ENCODE measurements at regions of chr1 and their contacts with region 1.

Region 1: GRCh38 chr1:151611832-151612500 is at the start of gene SNX27:
- DNase-seq: peak; percentile 76 to 96
- H3K4me3 ChIP-seq: peak within 1 kb of the TSS; percentile 66 to 95
- H3K27ac ChIP-seq: peak within 1 kb of the TSS; percentile 81 to 94
- H3K4me1 ChIP-seq: peaks cover 0 to 6% of the 10 kb centered on the region in 2 donors
- H3K27me3 ChIP-seq: no peaks in the 10 kb centered on the region
- CTCF ChIP-seq: no peak
- total RNA-seq, gene SNX27: 13.0 TPM

Region 2: GRCh38 chr1:151539990-151540981 is 71.7 kb before region 1 on chr1 and contains the start of gene TUFT1:
- intact Hi-C with region 1: loop called (anchors 2 kb)
- DNase-seq: peak; percentile 84 to 97
- H3K4me3 ChIP-seq: peak within 1 kb of the TSS; percentile 63 to 79
- H3K27ac ChIP-seq: peak within 1 kb of the TSS; percentile 71 to 75
- H3K4me1 ChIP-seq: peaks cover 4 to 25% of the 10 kb centered on the region in 2 donors
- H3K27me3 ChIP-seq: no peaks in the 10 kb centered on the region
- CTCF ChIP-seq: no peak
- total RNA-seq, gene TUFT1: 2.3 TPM

Region 3: GRCh38 chr1:151680812-151681211 is 68.8 kb after region 1 on chr1:
- intact Hi-C with region 1: loop called (anchors 2 kb)
- DNase-seq: no peak
- H3K4me3 ChIP-seq: peak overlapping the region in 1 of 2 donors; percentile 9
- H3K27ac ChIP-seq: peak overlapping the region; percentile 58 to 71
- H3K4me1 ChIP-seq: peaks cover 0 to 5% of the 10 kb centered on the region in 2 donors
- H3K27me3 ChIP-seq: no peaks in the 10 kb centered on the region
- CTCF ChIP-seq: no peak

Region 4: GRCh38 chr1:151720974-151721787 is 109.2 kb after region 1 on chr1 and contains the start of gene RIIAD1:
- intact Hi-C with region 1: loop called (anchors 5 kb)
- DNase-seq: peak in 1 of 2 donors; percentile 63
- H3K4me3 ChIP-seq: peak within 1 kb of the TSS; percentile 65 to 82
- H3K27ac ChIP-seq: peak within 1 kb of the TSS; percentile 73 to 78
- H3K4me1 ChIP-seq: peaks cover 6 to 7% of the 10 kb centered on the region in 2 donors
- H3K27me3 ChIP-seq: peaks cover 11% of the 10 kb centered on the region
- CTCF ChIP-seq: no peak
- total RNA-seq, gene RIIAD1: not detected

Region 5: DNA sequence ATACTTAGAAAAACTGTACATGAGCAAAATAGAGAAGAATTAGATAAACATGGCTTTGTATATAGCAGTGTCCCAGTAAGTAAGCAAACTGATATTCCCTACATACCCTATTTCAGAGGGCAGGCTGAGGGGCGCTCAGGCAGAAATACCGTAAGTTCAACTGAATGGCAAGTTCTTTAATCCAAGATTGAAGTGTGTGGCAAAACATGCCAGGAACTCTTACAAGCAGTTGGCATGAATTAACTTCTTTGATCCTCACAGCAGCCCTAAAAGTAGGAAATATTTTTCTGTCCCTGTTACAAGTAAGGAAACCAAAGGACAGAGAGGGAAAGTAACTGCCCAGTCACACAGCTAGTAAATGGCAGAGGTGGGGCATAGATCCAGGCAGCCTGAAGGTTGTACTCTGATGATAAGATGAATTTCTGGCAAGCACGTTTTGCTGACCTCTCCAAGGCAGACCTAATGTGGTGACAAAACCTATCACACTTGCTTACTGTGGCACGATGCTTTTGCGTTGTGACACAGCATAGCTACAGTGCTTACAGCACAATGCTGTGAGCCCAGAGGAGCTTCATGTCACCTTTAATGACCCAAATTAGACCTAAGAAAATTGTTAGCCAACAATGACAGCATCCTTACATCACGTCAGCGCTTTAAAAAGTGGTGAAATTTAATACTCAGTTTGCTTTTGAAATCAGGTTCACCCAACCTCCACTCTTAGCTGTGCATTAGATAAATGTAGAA is 332.3 kb after region 1 on chr1:
- intact Hi-C with region 1: no loop called
- DNase-seq: peak in 1 of 2 donors; percentile 68
- H3K4me3 ChIP-seq: no peak overlapping the region
- H3K27ac ChIP-seq: peak overlapping the region; percentile 72 to 82
- H3K4me1 ChIP-seq: peaks cover 0 to 36% of the 10 kb centered on the region in 2 donors
- H3K27me3 ChIP-seq: no peaks in the 10 kb centered on the region
- CTCF ChIP-seq: no peak